PC-9 (cell line): ENCODE measurements at regions of chr4 and their contacts with region 1.

Region 1: DNA sequence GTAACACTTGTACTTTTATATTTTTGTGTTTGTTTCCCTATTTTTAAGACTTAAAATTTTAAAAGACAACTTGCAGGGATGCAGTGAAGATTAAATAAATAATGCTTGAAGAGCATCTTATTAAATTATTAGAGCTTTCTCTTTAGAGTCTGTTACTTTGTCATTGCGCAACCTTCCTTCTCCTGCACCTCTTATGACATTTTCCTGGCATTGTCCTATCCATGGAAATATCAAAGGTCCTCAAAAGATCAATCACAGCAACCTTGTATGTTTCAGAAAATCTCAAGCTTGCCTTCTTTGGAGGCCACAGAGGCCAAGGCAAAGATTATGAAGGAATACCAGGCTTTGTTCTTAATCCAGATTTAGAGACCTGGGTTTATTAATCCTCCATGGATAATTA is 116.3 kb downstream of the GRXCR1 start:
- DNase-seq: no peak
- H3K4me3 ChIP-seq: no peak overlapping the region
- H3K27ac ChIP-seq: no peak overlapping the region
- H3K4me1 ChIP-seq: no peaks in the 10 kb centered on the region
- H3K27me3 ChIP-seq: no peaks in the 10 kb centered on the region
- CTCF ChIP-seq: no peak

Region 2: DNA sequence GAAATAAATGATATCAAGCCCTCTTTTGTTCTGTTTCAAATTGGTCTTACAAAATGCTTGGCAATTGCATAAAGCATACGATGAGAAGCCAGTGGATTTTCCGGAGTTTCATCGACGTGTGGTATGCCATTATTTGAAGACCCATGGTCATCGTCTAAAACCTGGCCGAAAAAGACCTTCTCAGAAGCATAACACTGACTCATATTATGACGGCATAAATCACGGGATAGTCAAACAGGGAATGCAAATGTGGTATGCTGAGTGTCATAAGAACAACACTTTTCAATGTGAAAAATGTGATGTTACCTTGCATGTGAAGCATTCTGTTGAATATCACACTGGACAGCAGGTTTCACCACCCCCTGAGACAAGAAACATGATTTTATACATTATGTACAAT is 579.0 kb after region 1 on chr4:
- CTCF ChIA-PET with region 1: no interaction called
- POLR2A ChIA-PET with region 1: interaction called, 15 read pairs
- intact Hi-C with region 1: no loop called
- DNase-seq: no peak
- H3K4me3 ChIP-seq: no peak overlapping the region
- H3K27ac ChIP-seq: no peak overlapping the region
- H3K4me1 ChIP-seq: no peaks in the 10 kb centered on the region
- H3K27me3 ChIP-seq: no peaks in the 10 kb centered on the region
- CTCF ChIP-seq: no peak